ENCODE measurements at regions of chr19 and their contacts with region 1.

Region 1: GRCh38 chr19:39765091-39766076 is 13.3 kb upstream of the LEUTX start:
- DNase-seq: peak; percentile 89
- ATAC-seq: peak; percentile 76
- H3K4me3 ChIP-seq: no peak overlapping the region
- H3K27ac ChIP-seq: no peak overlapping the region
- H3K4me1 ChIP-seq: no peaks in the 10 kb centered on the region
- H3K27me3 ChIP-seq: peaks cover 42% of the 10 kb centered on the region
- CTCF ChIP-seq: no peak

Region 2: GRCh38 chr19:39083983-39084731 is 681.2 kb before region 1 on chr19 and contains the start of gene ACP7:
- CTCF ChIA-PET with region 1: no interaction called
- POLR2A ChIA-PET with region 1: no interaction called
- in situ Hi-C with region 1: no loop called
- intact Hi-C with region 1: no loop called
- DNase-seq: no peak
- ATAC-seq: peak; percentile 64
- H3K4me3 ChIP-seq: peak within 1 kb of the TSS; percentile 35 to 72
- H3K27ac ChIP-seq: peak within 1 kb of the TSS; percentile 67
- H3K4me1 ChIP-seq: peaks cover 52% of the 10 kb centered on the region
- H3K27me3 ChIP-seq: no peaks in the 10 kb centered on the region
- CTCF ChIP-seq: no peak
- total RNA-seq, gene ACP7: 10.3 TPM

Region 3: DNA sequence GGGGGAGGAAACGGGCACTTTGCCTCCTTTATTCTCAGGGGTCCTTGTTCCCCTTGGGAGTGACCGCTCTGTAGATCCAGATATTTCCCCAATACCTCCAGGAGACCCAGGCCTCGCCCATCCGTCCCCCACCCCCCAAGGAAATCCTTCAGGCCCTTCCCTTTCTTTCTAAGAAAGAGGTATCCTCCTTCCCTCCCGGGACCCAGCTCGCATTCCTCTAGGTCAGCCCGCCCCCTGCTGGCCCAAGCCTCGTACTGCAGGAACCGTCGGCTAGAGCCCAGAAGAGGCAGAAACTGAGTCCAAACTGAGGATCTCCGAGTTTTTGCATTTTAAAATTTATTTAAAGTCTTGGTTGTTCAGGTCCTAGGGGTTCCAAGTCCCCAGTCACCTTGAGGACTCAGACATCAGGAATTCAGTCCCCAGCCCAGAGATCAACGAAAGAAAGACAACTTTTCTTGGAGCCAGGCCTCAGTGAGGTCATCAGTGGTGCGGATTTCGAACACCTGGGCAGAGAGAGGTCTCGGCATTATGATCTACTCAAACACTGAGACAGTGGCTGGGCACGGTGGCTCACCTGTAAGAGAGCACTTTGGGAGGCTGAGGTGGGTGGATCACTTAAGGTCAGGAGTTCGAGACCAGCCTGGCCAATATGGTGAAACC is 437.2 kb before region 1 on chr19:
- CTCF ChIA-PET with region 1: interaction called, 3 read pairs
- POLR2A ChIA-PET with region 1: no interaction called
- in situ Hi-C with region 1: no loop called
- intact Hi-C with region 1: loop called (anchors 5 kb)
- DNase-seq: peak; percentile 97
- ATAC-seq: peak; percentile 84
- H3K4me3 ChIP-seq: no peak overlapping the region
- H3K27ac ChIP-seq: peak overlapping the region; percentile 2
- H3K4me1 ChIP-seq: peaks cover 7% of the 10 kb centered on the region; the same call in 1 of the 2 replicates
- H3K27me3 ChIP-seq: no peaks in the 10 kb centered on the region
- CTCF ChIP-seq: no peak

Region 4: GRCh38 chr19:39546599-39546998 is 218.8 kb before region 1 on chr19:
- CTCF ChIA-PET with region 1: interaction called, 13 read pairs
- POLR2A ChIA-PET with region 1: no interaction called
- in situ Hi-C with region 1: no loop called
- intact Hi-C with region 1: loop called (anchors 2 kb)
- DNase-seq: no peak
- ATAC-seq: no peak; the same call in 1 of the 2 replicates
- H3K4me3 ChIP-seq: no peak overlapping the region
- H3K27ac ChIP-seq: no peak overlapping the region
- H3K4me1 ChIP-seq: peaks cover 6% of the 10 kb centered on the region
- H3K27me3 ChIP-seq: peaks cover 20% of the 10 kb centered on the region
- CTCF ChIP-seq: no peak

Region 5: DNA sequence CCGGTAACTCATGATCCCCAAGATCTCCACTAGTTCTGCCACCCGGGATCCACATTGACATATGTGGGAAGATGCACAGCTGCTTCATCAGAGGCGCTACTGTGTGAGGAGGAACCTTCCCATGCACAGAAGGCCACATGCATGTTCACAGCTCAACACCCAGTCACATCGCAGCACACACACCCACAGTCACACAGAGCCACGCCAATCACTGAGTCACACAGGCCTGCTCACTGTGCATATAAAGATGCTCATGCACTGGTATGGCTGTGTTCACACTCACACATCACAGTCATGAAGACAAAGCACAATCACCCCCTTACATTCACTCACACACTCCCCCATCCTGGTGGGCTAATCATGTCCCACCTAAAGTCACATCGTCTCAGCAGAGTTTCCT is 37.3 kb before region 1 on chr19:
- CTCF ChIA-PET with region 1: interaction called, 10 read pairs
- POLR2A ChIA-PET with region 1: no interaction called
- in situ Hi-C with region 1: no loop called
- intact Hi-C with region 1: no loop called
- DNase-seq: no peak
- ATAC-seq: peak; percentile 51
- H3K4me3 ChIP-seq: no peak overlapping the region
- H3K27ac ChIP-seq: no peak overlapping the region
- H3K4me1 ChIP-seq: no peaks in the 10 kb centered on the region
- H3K27me3 ChIP-seq: peaks cover 61% of the 10 kb centered on the region
- CTCF ChIP-seq: no peak

Region 6: GRCh38 chr19:39818626-39819097 is 53.3 kb after region 1 on chr19:
- CTCF ChIA-PET with region 1: interaction called, 13 read pairs
- POLR2A ChIA-PET with region 1: no interaction called
- in situ Hi-C with region 1: no loop called
- intact Hi-C with region 1: no loop called
- DNase-seq: no peak
- ATAC-seq: 0 out of 2 replicates have a peak, but pooled peaks have one; percentile 0
- H3K4me3 ChIP-seq: no peak overlapping the region
- H3K27ac ChIP-seq: no peak overlapping the region
- H3K4me1 ChIP-seq: peaks cover 4% of the 10 kb centered on the region
- H3K27me3 ChIP-seq: no peaks in the 10 kb centered on the region
- CTCF ChIP-seq: no peak

Region 7: DNA sequence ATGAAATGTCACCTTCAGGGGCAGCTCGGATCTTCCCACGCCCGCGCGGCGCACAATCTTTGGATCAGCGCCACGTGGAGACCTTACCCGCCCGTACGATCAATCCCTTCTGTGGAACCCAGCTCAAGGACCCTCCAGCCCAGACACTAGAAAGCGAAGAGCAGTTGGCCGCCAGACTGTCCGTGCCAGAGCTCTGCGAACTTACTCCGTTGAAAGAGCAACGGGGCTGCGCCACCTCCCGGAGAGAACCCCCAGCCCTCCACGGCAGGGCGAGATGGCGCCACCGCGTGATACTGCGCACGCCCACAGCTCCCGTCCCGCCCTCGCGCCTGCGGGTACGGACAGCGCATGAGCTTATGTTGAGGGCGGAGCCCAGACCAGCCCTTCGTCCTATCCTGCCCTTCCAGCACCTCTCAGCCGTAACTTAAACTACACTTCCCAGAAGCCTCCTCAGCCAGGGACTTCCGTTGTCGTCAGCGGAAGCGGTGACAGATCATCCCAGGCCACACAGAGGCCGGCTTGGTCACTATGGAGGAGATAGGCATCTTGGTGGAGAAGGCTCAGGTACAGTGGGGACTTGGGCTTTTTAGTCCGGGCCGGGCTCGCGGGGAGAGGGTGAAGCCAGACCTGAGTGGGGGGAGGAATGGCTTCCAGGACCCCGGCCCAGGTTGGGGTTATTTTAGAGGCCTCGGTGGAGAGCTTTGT is 205.4 kb after region 1 on chr19 and contains the start of gene PSMC4:
- CTCF ChIA-PET with region 1: interaction called, 10 read pairs
- POLR2A ChIA-PET with region 1: interaction called, 6 read pairs
- in situ Hi-C with region 1: no loop called
- intact Hi-C with region 1: no loop called
- DNase-seq: peak; percentile 100
- ATAC-seq: peak; percentile 98
- H3K4me3 ChIP-seq: peak within 1 kb of the TSS; percentile 35 to 50
- H3K27ac ChIP-seq: peak within 1 kb of the TSS; percentile 82
- H3K4me1 ChIP-seq: peaks cover 17% of the 10 kb centered on the region
- H3K27me3 ChIP-seq: no peaks in the 10 kb centered on the region
- CTCF ChIP-seq: no peak
- total RNA-seq, gene PSMC4: 2,386 TPM

Region 8: DNA sequence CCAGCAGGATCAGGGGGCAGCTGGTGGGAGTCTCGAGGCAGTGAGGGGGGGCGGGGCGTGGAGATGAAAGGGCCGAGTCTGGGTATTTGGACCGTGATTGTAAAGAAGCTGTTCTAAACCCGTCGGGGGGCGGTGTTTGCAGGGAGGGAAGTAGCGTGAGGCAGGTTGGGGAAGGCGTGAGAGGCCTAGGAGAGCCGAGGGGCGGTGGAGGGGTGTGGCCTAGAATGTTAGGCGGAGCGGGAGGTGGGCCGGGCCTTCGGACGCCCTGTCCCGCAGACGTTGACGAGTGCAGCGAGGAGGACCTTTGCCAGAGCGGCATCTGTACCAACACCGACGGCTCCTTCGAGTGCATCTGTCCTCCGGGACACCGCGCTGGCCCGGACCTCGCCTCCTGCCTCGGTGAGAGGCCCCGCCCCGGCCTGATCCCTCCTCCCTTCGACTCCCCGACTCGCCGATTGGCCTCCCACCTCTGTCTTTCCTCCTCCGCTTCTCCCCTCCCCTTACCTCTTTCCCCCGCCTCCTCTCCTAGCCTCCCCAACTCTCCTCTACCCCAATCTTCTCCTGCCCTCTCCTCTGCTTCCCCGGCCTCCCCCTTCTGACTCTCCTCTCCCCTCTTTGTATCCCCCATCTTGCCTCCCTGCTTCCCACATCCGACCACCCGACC is 848.4 kb after region 1 on chr19:
- CTCF ChIA-PET with region 1: no interaction called
- POLR2A ChIA-PET with region 1: no interaction called
- in situ Hi-C with region 1: no loop called
- intact Hi-C with region 1: no loop called
- DNase-seq: no peak
- ATAC-seq: no peak
- H3K4me3 ChIP-seq: no peak overlapping the region
- H3K27ac ChIP-seq: no peak overlapping the region
- H3K4me1 ChIP-seq: no peaks in the 10 kb centered on the region
- H3K27me3 ChIP-seq: no peaks in the 10 kb centered on the region
- CTCF ChIP-seq: no peak

Measured in Panc1 (cell line).